Gastrocnemius medialis (tissue), 4 donors: ENCODE measurements at regions of chr2 and their contacts with region 1.

Region 1: DNA sequence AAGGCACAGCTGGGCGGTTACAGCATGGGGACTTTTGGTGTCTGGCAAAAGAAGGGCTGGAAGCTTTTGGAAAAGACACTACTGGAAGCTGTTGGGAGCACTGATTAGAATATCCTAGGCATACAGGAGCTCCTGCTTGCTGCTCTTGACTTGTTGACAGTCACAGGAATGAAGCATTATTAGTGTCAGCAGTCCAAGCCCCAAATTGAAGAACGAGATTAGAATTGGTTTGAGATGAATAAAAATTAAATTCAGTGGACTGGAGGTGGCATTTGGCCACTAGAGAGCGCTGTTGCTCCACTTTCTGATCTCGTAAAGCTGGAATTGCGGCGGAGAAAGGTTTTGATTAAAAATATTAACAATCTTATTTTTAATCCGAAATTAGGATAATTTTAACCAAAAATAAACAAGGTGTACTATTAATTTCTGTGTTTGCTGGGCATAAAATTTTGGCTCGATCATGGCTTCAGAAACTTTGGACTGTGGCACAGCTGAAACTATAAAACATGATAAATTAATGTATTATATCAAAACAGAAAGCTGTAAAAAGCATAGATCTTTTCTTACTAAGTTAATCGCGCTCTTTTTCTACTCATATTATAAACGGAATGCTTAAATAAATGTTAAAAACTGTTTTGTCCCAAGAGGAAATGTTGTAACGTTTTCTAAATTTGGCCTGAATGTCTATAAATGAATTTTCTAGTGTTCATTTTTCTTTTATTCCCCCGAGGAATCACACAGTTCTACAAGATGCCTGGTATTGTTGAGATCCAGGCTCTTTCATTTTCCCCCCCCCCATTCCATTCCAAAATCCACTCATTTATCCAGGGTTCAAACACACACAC is 2.4 kb upstream of the HOXD8 start:
- DNase-seq: peak in 1 of 2 donors; percentile 42
- ATAC-seq: no peak
- H3K4me3 ChIP-seq: peak overlapping the region in 3 of 4 donors; percentile 17 to 29 (median 27)
- H3K27ac ChIP-seq: peak overlapping the region in 1 of 4 donors; percentile 87
- H3K4me1 ChIP-seq: peaks cover 6 to 7% of the 10 kb centered on the region in 2 donors
- H3K27me3 ChIP-seq: peaks cover 11 to 70% (median 55%) of the 10 kb centered on the region in 3 donors
- CTCF ChIP-seq: peak; percentile 76 to 95 (median 85)
- POLR2A ChIP-seq: no peak

Region 2: DNA sequence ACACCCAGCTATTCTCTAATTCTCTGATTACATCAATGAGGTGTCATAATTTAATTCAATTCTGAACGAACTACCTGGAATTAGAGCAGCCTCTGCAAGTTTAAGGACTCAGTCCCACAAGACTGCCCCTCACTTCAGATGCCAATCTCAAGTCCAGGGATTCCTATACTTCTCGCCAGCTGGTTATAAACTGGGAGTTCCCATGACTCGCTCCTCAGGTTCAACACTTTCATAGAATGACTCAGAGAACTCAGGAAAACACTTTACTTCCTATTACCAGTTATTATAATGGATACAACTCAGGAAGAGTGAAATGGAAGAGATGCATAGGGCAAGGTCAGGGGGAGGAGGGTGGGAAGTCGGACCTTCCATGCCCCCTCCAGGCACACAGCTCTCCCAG is 833.4 kb before region 1 on chr2:
- in situ Hi-C with region 1: no loop called
- intact Hi-C with region 1: no loop called
- DNase-seq: no peak
- ATAC-seq: no peak
- H3K4me3 ChIP-seq: no peak overlapping the region
- H3K27ac ChIP-seq: no peak overlapping the region
- H3K4me1 ChIP-seq: no peaks in the 10 kb centered on the region
- H3K27me3 ChIP-seq: no peaks in the 10 kb centered on the region
- CTCF ChIP-seq: no peak
- POLR2A ChIP-seq: no peak

Region 3: DNA sequence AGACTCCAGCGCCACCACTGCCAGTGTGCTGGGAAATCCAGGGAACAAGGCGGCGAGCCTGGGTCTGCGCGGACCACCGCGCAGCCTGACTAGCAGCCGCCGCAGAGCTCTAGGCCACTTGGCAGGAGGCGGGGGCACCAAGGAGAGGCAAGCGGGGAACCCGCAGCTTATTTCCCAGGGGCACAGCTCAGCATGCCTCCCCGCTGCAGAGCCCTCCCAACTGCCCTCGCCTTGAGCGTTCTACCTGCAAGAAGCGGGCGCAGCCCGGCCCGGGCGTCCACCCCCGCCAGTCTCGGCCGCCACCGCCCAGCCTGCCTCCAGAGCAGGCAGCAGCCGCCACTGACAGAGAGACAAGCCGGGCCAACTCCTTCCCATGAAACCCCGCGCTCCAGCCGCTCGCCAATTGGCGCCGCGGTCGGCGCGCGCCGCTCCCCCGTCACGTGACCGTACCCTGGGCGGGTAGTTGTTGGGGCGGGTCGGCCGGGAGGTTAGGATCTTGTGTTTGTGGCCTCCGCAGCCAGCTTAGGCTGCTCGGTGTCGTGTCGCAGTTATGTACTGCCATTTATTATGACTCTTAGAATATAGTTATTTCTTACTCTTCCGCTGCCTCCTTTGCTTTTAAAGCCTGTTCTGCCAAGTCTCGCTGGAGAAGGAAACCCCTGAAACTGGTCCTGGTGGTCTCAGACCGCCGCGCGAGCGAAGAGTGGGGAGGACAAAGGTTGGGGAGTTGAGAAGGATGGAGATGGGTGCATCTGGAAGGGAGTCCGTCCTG is 125.0 kb before region 1 on chr2 and contains the start of gene LNPK:
- in situ Hi-C with region 1: no loop called
- intact Hi-C with region 1: loop called (anchors 5 kb)
- DNase-seq: peak; percentile 89 to 94
- ATAC-seq: peak; percentile 82 to 85
- H3K4me3 ChIP-seq: peak within 1 kb of the TSS; percentile 76 to 90 (median 84)
- H3K27ac ChIP-seq: peak within 1 kb of the TSS; percentile 95 to 98 (median 98)
- H3K4me1 ChIP-seq: peaks cover 32 to 51% of the 10 kb centered on the region in 2 donors
- H3K27me3 ChIP-seq: no peaks in the 10 kb centered on the region
- CTCF ChIP-seq: peak in 2 of 5 experiments; percentile 18 to 25
- POLR2A ChIP-seq: peak; percentile 91 to 94
- total RNA-seq, gene LNPK: 23.0 to 84.4 (median 50.1) TPM

Region 4: DNA sequence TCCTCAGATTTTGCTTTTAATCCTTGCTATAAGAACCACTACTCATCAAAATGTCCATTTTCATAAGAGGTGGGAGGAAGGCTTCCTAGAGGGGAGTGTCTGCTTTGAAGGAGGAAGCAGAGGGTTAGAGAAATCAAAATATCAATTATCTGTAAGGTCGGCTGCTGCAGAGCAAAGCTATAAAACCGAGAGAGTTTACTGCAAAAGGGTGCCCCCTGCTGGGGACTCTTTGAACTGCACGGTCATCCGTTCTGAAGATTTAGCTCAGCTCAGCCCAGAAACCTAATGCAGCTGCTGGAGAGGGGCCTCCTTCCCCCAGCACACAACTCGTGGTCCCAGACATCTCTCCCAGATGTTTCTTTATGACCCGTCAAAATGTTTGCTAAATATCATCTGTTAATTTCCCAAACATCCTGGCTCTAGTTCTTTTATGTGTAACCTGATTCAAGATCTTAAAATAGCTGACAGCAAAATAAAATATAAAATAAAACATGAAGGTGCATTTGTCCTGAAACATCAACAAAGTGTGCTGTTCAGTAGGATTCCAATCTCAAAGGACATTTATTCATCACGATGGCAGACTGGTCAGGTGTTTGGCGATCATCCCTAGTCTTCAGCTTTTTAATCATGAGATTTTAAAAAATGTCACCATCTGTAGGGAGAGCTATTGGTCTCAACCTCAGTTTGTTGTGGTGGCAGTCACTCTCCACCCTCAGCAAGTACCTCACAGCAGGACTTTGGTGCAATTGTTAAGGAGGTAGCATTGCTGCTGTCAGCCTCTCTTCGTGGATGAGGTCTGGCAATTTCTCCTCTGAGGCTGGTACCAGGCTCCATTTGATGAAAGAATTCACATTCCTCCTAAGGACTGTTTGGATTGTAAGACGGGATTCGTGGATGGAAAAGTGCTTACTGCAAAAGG is 328.0 kb after region 1 on chr2:
- in situ Hi-C with region 1: loop called in 3 of 4 experiments (anchors 5 kb)
- intact Hi-C with region 1: loop called (anchors 1 kb)
- DNase-seq: peak; percentile 42 to 59
- ATAC-seq: peak; percentile 10 to 72
- H3K4me3 ChIP-seq: no peak overlapping the region
- H3K27ac ChIP-seq: peak overlapping the region; percentile 24 to 59 (median 45)
- H3K4me1 ChIP-seq: peaks cover 0 to 5% of the 10 kb centered on the region in 2 donors
- H3K27me3 ChIP-seq: no peaks in the 10 kb centered on the region
- CTCF ChIP-seq: peak; percentile 66 to 95 (median 82)
- POLR2A ChIP-seq: no peak

Region 5: DNA sequence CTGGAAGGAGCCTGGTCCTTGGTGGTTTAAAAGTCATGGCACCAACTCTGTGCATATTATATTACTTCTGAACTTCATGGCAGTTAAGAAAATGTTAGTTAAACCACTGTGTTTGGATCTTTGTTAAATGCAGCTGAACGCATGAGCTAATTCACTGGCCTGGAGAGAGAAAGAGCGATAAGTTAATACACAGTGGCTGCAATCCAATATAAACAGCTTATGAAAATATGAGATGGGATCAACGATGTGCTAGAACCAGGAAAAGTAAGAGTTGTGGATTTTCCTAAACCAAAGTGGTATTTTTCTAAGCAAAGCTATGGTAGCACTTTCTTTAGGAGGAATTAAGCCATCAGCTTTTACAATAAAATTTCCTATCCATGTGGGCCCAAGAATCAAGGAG is 468.8 kb after region 1 on chr2:
- in situ Hi-C with region 1: no loop called
- intact Hi-C with region 1: no loop called
- DNase-seq: no peak
- ATAC-seq: no peak
- H3K4me3 ChIP-seq: no peak overlapping the region
- H3K27ac ChIP-seq: no peak overlapping the region
- H3K4me1 ChIP-seq: no peaks in the 10 kb centered on the region
- H3K27me3 ChIP-seq: no peaks in the 10 kb centered on the region
- CTCF ChIP-seq: no peak
- POLR2A ChIP-seq: no peak

Region 6: DNA sequence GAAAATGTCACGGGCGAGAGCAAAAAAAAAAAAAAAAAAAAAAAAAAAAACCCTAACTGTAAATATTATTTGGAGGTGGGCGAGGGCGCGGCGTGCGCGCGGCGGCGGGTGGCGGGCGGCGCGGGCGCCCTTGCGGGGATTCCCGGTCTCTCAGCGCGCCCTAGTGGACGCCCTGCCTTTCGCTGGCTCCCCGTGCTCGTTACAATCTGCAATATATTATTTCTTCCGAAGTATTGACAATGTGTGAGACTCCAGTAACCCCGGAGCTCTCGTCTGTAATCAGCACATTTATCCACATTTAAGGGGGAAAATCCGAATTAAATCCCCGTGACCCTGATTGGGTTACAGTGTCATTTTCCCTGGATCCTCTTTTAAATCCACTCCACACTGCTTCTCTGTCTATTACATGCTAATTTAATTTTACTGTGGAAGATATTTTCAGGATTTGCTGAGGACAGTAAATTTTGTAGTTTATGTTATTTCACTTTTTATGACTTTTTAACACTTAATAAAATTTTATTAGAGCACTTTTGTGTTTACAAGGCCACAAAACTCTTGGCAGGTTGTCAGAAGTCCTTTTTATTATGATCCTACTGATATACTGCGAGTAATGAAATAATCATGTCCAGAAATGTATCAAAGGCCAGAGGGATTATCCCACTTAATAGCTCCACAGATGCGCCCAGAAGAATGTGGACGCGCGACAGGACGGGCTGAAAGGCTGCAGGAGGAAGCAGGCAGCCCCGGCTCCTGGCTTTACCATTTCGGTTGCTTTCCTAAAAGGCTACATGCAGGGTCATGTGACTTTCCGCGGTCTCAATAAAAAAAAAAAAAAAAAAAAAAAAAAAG is 511.2 kb after region 1 on chr2:
- in situ Hi-C with region 1: loop called in 3 of 4 experiments (anchors 5 to 10 kb)
- intact Hi-C with region 1: loop called (anchors 2 kb)
- DNase-seq: peak; percentile 26 to 37
- ATAC-seq: peak; percentile 81 to 88
- H3K4me3 ChIP-seq: peak overlapping the region; percentile 63 to 84 (median 68)
- H3K27ac ChIP-seq: peak overlapping the region in 3 of 4 donors; percentile 50 to 70 (median 56)
- H3K4me1 ChIP-seq: peaks cover 0 to 5% of the 10 kb centered on the region in 2 donors
- H3K27me3 ChIP-seq: peaks cover 9 to 31% (median 23%) of the 10 kb centered on the region in 3 donors
- CTCF ChIP-seq: peak; percentile 59 to 81 (median 74)
- POLR2A ChIP-seq: no peak

Region 7: DNA sequence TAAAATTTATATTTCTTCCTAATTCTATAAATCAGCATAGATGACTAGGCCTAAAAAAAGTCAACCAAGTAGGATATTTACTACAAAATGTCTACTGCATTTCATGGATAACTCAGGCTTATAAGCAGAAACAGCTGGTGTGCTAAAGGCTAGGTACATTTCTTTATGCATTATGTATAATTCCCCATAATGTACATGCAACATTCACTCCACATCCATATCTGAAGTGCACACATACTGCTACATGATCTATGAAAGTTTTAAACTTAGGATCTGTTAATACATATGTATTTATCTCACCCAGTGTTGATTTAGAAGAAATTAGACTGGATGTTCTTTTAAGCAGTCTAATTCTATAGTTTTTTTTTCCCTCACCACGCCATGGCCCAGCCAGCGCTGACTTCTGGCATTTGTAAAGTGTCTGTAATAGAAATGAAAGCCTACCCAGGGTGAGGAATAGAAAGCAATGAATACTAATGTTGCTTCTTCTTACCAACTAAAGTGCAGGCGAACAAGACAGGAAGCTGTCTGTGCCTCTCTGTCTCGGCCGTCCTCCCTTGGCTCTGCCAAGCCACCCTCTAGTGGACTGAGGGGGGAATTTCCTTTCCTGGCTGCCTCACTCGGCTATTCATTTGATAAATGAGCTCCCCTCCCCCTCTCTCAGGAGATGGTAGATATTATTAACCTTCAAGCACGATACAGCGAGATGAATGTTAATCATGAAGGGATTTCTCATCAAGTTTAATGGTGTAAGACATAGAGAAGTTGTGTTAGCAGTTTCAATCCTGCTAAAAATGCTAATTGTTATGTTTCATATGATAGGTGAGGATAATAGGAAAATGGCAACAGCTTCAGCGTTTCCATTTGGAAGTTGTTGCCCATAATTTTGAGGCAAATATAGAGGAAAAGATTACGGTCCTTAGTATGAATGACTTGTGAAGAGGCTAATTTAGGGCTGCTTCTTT is 526.6 kb after region 1 on chr2:
- in situ Hi-C with region 1: loop called in 1 of 4 experiments (anchors 5 kb)
- intact Hi-C with region 1: loop called (anchors 5 kb)
- DNase-seq: peak; percentile 20 to 45
- ATAC-seq: peak; percentile 54 to 81
- H3K4me3 ChIP-seq: no peak overlapping the region
- H3K27ac ChIP-seq: no peak overlapping the region
- H3K4me1 ChIP-seq: no peaks in the 10 kb centered on the region
- H3K27me3 ChIP-seq: peaks cover 0 to 3% (median 0%) of the 10 kb centered on the region in 3 donors
- CTCF ChIP-seq: peak in 4 of 5 experiments; percentile 32 to 71 (median 57)
- POLR2A ChIP-seq: no peak

Region 8: DNA sequence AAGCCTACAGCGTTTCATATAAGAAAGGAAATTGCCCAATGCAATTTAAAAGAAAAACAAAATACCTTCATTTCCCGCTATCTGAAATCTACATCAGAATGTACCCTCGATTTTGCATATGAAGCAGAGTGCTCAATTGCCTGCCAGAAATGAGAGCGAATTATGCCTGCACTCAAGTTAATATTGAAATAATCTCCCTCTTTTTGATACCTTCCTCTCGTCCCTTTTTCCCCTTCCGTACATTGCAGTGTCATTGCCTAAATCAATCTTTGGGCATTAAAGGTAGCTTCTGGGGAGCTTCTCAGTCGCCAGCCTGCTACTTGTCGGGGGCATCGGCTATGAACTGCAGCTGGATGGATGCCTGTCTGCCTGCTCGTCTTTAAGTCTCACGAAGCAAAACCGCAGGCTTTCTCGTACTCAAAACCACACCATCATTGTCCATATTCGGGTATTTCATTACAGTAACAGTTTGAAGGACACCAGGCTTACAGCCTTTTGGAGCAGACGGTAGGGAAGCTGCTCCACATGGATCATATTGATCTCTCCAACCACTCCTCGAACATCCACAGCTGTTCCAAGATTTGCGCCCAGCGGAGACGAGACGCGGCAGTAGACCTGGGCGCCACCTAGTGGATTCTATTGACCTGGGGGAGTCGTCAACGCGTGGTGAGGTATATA is 1021.5 kb after region 1 on chr2:
- in situ Hi-C with region 1: loop called in 2 of 4 experiments (anchors 25 kb)
- intact Hi-C with region 1: loop called (anchors 10 kb)
- DNase-seq: peak; percentile 31 to 53
- ATAC-seq: peak; percentile 68 to 91
- H3K4me3 ChIP-seq: peak overlapping the region; percentile 42 to 54 (median 52)
- H3K27ac ChIP-seq: no peak overlapping the region
- H3K4me1 ChIP-seq: no peaks in the 10 kb centered on the region
- H3K27me3 ChIP-seq: peaks cover 3 to 15% (median 13%) of the 10 kb centered on the region in 3 donors
- CTCF ChIP-seq: peak; percentile 38 to 85 (median 49)
- POLR2A ChIP-seq: no peak